ENCODE measurements at regions of chr9 and their contacts with region 1.

Region 1: GRCh38 chr9:136902259-136902821 is 16.0 kb downstream of the TRAF2 start:
- DNase-seq: peak; percentile 97
- H3K4me3 Mint-ChIP-seq: peak overlapping the region; percentile 78
- H3K27ac Mint-ChIP-seq: peak overlapping the region; percentile 99
- H3K4me1 Mint-ChIP-seq: peaks cover 48% of the 10 kb centered on the region
- H3K27me3 Mint-ChIP-seq: no peaks in the 10 kb centered on the region

Region 2: DNA sequence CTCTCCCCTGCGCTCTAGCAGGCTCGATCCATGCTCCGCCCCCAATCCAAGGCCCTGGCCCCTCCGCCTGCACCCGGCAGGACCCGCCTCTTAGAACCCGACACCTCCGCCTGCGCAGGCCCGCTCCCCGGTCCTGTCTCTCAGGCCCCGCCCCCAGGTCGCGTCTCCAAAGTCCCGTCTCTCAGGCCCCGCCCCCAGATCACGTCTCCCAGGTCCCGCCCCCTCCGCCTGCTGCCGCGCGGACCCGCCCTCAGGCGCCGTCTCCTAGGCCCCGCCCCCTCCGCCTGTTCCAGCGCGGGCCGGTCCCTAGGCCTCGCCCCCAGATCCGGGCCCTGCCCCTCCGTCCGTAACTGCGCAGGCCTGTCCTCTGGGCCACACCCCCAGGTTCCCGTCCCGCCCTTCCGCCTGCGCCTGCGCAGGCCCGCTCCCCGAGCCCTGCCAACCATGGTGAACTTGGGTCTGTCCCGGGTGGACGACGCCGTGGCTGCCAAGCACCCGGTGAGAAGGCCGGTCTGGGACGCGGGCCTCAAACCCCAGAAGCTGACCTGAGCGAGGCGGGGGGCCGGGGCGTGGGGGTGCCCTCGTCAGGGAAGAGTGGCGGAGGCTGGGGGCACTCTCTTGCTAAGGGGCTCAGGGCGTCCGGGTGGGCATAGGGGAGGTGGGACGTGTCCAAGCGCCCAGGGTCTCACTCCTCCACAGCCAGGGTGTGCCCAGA is 111.3 kb before region 1 on chr9 and contains the start of gene TMEM141:
- intact Hi-C with region 1: no loop called
- DNase-seq: peak; percentile 100
- H3K4me3 Mint-ChIP-seq: peak within 1 kb of the TSS; percentile 87
- H3K27ac Mint-ChIP-seq: peak within 1 kb of the TSS; percentile 91
- H3K4me1 Mint-ChIP-seq: peaks cover 26% of the 10 kb centered on the region
- H3K27me3 Mint-ChIP-seq: peaks cover 16% of the 10 kb centered on the region
- total RNA-seq, gene TMEM141: 36.1 and 40.1 TPM in 2 replicates

Region 3: GRCh38 chr9:136807281-136808074 is 94.9 kb before region 1 on chr9 and contains the start of gene RABL6:
- intact Hi-C with region 1: loop called (anchors 5 kb)
- DNase-seq: peak; percentile 96
- H3K4me3 Mint-ChIP-seq: peak within 1 kb of the TSS; percentile 91
- H3K27ac Mint-ChIP-seq: peak within 1 kb of the TSS; percentile 93
- H3K4me1 Mint-ChIP-seq: peaks cover 36% of the 10 kb centered on the region
- H3K27me3 Mint-ChIP-seq: no peaks in the 10 kb centered on the region
- total RNA-seq, gene RABL6: 116 and 119 TPM in 2 replicates

Region 4: GRCh38 chr9:136865735-136866103 is 36.6 kb before region 1 on chr9:
- intact Hi-C with region 1: loop called (anchors 1 kb)
- DNase-seq: no peak
- H3K4me3 Mint-ChIP-seq: peak overlapping the region; percentile 90
- H3K27ac Mint-ChIP-seq: peak overlapping the region; percentile 89
- H3K4me1 Mint-ChIP-seq: peaks cover 19% of the 10 kb centered on the region
- H3K27me3 Mint-ChIP-seq: no peaks in the 10 kb centered on the region

Region 5: GRCh38 chr9:136944519-136945279 is 42.4 kb after region 1 on chr9 and contains the starts of genes C8G and FBXW5:
- intact Hi-C with region 1: loop called (anchors 1 kb)
- DNase-seq: peak; percentile 99
- H3K4me3 Mint-ChIP-seq: peak within 1 kb of the TSS; percentile 83
- H3K27ac Mint-ChIP-seq: peak within 1 kb of the TSS; percentile 87
- H3K4me1 Mint-ChIP-seq: peaks cover 3% of the 10 kb centered on the region
- H3K27me3 Mint-ChIP-seq: no peaks in the 10 kb centered on the region
- total RNA-seq, gene C8G: 0.69 and 1.7 TPM in 2 replicates
- total RNA-seq, gene FBXW5: 92.7 and 93.6 TPM in 2 replicates